PC-3 (cell line): ENCODE measurements at regions of chr16 and their contacts with region 1.

Region 1: DNA sequence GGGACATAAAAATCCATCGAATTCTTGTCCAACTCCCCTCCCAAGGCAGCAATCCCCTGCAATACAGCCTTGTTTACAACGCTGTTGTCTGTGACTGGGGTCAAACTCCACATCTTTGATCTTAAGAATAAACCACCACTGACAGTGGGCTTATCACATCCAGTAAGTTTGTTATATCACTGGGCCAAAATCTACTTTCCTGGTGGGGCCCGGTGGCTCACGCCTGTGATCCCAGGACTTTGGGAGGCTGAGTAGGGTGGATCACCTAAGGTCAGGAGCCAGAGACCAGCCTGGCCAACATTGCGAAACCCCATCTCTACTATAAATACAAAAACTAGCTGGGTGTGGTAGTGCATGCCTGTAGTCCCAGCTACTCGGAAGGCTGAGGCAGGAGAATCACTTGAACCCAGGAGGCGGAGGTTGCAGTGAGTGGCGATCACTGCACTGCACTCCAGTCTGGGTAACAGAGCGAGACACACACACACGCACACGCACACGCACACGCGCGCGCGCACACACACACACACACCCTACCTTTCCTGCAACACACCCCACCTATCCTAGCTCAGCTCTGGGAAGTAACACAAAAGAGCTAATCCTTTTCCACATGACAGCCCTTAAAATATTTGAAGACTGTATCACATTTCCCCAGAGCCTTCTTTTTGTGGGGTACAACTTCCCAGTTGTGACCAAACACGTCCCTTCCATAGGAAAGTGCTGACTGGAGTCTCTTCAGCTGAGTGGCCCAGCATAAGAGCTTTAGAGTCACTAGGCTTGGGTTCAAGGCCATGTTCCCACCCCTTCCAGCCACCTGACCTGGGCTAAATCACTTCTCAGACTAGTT is 20.9 kb upstream of the ABCC1 start:
- DNase-seq: no peak
- ATAC-seq: no peak
- H3K4me3 ChIP-seq: no peak overlapping the region
- H3K27ac ChIP-seq: no peak overlapping the region
- H3K4me1 ChIP-seq: no peaks in the 10 kb centered on the region
- H3K27me3 ChIP-seq: no peaks in the 10 kb centered on the region
- CTCF ChIP-seq: no peak

Region 2: DNA sequence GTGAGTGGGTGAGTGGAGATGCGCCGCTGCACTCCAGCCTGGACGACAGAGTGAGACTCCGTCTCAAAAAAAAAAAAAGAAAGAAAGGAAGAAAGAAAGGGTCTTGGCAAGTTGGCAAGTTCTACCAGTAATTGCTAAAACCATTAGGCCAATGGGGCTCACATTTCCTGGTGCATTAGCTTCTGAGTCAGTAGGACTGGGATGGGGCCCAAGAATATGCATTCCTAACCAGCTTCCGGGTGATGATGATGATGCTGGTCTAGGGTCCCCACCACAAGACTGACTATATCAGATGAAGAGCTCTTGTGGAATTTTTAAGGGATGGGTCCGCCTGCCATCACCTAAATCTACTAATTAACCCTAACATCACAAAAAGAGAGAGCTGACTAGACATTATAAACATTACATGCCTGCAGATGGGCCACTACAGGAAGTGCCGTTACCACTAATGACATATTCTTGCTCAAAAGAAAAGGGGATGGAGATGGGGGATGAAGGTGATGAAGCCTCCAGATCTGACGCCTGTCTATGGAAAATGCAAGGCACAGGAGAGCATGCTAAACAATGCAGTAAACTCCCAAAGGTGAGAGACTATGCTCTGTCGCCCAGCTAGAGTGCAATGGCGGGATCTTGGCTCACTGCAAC is 84.7 kb before region 1 on chr16:
- CTCF ChIA-PET with region 1: interaction called, 24 read pairs
- POLR2A ChIA-PET with region 1: interaction called, 4 read pairs
- intact Hi-C with region 1: no loop called
- DNase-seq: no peak
- ATAC-seq: no peak
- H3K4me3 ChIP-seq: no peak overlapping the region
- H3K27ac ChIP-seq: no peak overlapping the region
- H3K4me1 ChIP-seq: no peaks in the 10 kb centered on the region
- H3K27me3 ChIP-seq: no peaks in the 10 kb centered on the region
- CTCF ChIP-seq: no peak